ENCODE measurements at regions of chr18 and their contacts with region 1.

Region 1: GRCh38 chr18:77207540-77207939 is 42.1 kb upstream of the GALR1 start:
- DNase-seq: peak; percentile 46 to 74 (median 49)
- ATAC-seq: peak in 3 of 4 donors; percentile 52 to 66 (median 62)
- H3K4me3 ChIP-seq: no peak overlapping the region
- H3K27ac ChIP-seq: peak overlapping the region in 8 of 12 donors; percentile 4 to 91 (median 31)
- H3K4me1 ChIP-seq: peaks cover 0 to 53% (median 14%) of the 10 kb centered on the region in 12 donors
- H3K27me3 ChIP-seq: no peaks in the 10 kb centered on the region
- CTCF ChIP-seq: peak in 11 of 12 donors; percentile 31 to 63 (median 47)
- POLR2A ChIP-seq: no peak

Region 2: GRCh38 chr18:76922107-76922506 is 285.4 kb before region 1 on chr18:
- intact Hi-C with region 1: loop called in 1 of 10 experiments (anchors 5 kb)
- DNase-seq: peak in 3 of 5 donors; percentile 32 to 62 (median 43)
- ATAC-seq: peak; percentile 83 to 93 (median 92)
- H3K4me3 ChIP-seq: no peak overlapping the region
- H3K27ac ChIP-seq: no peak overlapping the region
- H3K4me1 ChIP-seq: no peaks in the 10 kb centered on the region
- H3K27me3 ChIP-seq: no peaks in the 10 kb centered on the region
- CTCF ChIP-seq: peak; percentile 21 to 64 (median 46)
- POLR2A ChIP-seq: no peak

Region 3: GRCh38 chr18:77054606-77055428 is 152.7 kb before region 1 on chr18:
- intact Hi-C with region 1: loop called in 6 of 10 experiments (anchors 5 to 10 kb)
- DNase-seq: peak; percentile 80 to 91 (median 88)
- ATAC-seq: peak; percentile 62 to 86 (median 80)
- H3K4me3 ChIP-seq: peak overlapping the region in 2 of 12 donors; percentile 10 to 39
- H3K27ac ChIP-seq: peak overlapping the region; percentile 53 to 99 (median 78)
- H3K4me1 ChIP-seq: peaks cover 0 to 79% (median 53%) of the 10 kb centered on the region in 12 donors
- H3K27me3 ChIP-seq: no peaks in the 10 kb centered on the region
- CTCF ChIP-seq: peak; percentile 37 to 80 (median 58)
- POLR2A ChIP-seq: no peak

Region 4: DNA sequence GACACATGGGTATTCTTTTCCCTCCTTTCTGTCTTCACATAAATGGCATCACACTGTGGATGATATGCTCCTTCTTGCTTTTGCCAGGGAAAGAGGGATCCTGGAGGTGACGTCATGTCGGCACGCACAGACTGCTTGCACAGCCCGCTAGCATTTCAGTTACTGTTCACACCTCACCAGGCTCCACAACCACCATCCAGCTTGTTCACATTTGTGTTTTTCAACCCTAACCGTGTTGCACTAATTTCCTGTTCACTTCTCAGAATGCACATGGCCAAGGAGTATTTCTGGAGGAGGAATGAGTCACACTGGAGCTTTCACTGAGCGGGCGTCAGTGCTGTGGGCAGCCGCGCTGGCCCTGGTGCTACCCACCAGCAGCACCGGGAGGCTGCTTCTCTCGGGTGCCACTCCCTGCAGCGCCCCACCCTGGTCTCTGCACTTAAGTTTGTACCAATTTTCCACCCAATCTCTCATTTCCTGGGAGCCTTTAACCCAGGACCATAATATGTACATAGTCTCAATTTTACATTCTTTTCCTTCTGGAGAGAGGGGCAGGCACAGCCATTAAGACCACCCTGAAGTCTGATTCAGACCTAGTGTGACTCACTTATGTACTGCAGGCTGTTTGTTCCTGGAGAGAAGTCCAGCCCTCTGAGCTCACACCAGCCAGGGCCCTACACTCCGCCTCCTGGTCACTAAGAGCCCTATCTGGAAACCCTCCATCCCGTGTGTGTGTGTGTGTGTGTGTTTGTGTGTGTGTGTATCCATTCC is 140.1 kb before region 1 on chr18:
- intact Hi-C with region 1: loop called in 3 of 10 experiments (anchors 5 to 10 kb)
- DNase-seq: peak in 3 of 5 donors; percentile 61 to 84 (median 77)
- ATAC-seq: peak; percentile 63 to 83 (median 74)
- H3K4me3 ChIP-seq: peak overlapping the region in 2 of 12 donors; percentile 7 to 17
- H3K27ac ChIP-seq: peak overlapping the region; percentile 33 to 88 (median 72)
- H3K4me1 ChIP-seq: peaks cover 0 to 97% (median 45%) of the 10 kb centered on the region in 12 donors
- H3K27me3 ChIP-seq: no peaks in the 10 kb centered on the region
- CTCF ChIP-seq: peak in 1 of 12 donors; percentile 7
- POLR2A ChIP-seq: no peak

Region 5: GRCh38 chr18:77132371-77133050 is 75.0 kb before region 1 on chr18 and contains the start of gene MBP:
- intact Hi-C with region 1: loop called in 2 of 10 experiments (anchors 5 to 10 kb)
- DNase-seq: peak; percentile 56 to 83 (median 73)
- ATAC-seq: peak in 3 of 4 donors; percentile 18 to 69 (median 56)
- H3K4me3 ChIP-seq: peak within 1 kb of the TSS; percentile 59 to 98 (median 80)
- H3K27ac ChIP-seq: peak within 1 kb of the TSS; percentile 70 to 98 (median 88)
- H3K4me1 ChIP-seq: peaks cover 0 to 55% (median 36%) of the 10 kb centered on the region in 12 donors
- H3K27me3 ChIP-seq: peaks cover 0 to 28% (median 0%) of the 10 kb centered on the region in 9 donors
- CTCF ChIP-seq: no peak
- POLR2A ChIP-seq: peak in 1 of 2 donors; percentile 59
- total RNA-seq, gene MBP: 15.8 to 93.0 (median 38.8) TPM

Region 6: DNA sequence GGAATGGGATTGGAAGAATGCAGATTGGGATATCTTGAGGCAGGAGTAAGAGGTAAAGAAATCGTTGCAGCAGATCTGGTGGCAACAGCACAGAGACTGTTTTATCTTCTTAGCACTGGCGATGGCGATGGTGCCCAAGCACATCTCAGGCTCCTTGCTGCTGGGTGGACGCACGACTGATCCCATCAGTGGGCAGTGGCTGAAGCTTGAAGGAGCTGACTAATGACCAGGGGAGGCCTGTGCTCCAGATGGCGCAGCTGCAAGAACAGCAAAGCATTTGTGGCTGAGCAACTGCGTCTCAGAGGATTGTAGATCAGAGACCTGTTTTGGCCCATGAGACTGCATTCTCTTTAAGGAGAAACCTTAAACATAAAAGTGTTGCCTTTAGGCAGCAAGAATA is 96.7 kb after region 1 on chr18:
- intact Hi-C with region 1: no loop called
- DNase-seq: no peak
- ATAC-seq: no peak
- H3K4me3 ChIP-seq: no peak overlapping the region
- H3K27ac ChIP-seq: no peak overlapping the region
- H3K4me1 ChIP-seq: no peaks in the 10 kb centered on the region
- H3K27me3 ChIP-seq: peaks cover 0 to 3% (median 0%) of the 10 kb centered on the region in 9 donors
- CTCF ChIP-seq: no peak
- POLR2A ChIP-seq: no peak

Measured in heart left ventricle (tissue), 16 donors.